ENCODE measurements at regions of chr5 and their contacts with region 1.

Region 1: GRCh38 chr5:91419571-91420537 is 36.7 kb upstream of the ARRDC3 start:
- DNase-seq: peak; percentile 47 to 82 (median 77)
- ATAC-seq: no peak
- H3K4me3 ChIP-seq: no peak overlapping the region
- H3K4me3 Mint-ChIP-seq: no peak overlapping the region
- H3K27ac ChIP-seq: no peak overlapping the region
- H3K27ac Mint-ChIP-seq: no peak overlapping the region
- H3K4me1 ChIP-seq: peaks cover 9% of the 10 kb centered on the region
- H3K4me1 Mint-ChIP-seq: peaks cover 22% of the 10 kb centered on the region
- H3K27me3 ChIP-seq: no peaks in the 10 kb centered on the region
- H3K27me3 Mint-ChIP-seq: no peaks in the 10 kb centered on the region
- CTCF ChIP-seq: peak; percentile 92

Region 2: DNA sequence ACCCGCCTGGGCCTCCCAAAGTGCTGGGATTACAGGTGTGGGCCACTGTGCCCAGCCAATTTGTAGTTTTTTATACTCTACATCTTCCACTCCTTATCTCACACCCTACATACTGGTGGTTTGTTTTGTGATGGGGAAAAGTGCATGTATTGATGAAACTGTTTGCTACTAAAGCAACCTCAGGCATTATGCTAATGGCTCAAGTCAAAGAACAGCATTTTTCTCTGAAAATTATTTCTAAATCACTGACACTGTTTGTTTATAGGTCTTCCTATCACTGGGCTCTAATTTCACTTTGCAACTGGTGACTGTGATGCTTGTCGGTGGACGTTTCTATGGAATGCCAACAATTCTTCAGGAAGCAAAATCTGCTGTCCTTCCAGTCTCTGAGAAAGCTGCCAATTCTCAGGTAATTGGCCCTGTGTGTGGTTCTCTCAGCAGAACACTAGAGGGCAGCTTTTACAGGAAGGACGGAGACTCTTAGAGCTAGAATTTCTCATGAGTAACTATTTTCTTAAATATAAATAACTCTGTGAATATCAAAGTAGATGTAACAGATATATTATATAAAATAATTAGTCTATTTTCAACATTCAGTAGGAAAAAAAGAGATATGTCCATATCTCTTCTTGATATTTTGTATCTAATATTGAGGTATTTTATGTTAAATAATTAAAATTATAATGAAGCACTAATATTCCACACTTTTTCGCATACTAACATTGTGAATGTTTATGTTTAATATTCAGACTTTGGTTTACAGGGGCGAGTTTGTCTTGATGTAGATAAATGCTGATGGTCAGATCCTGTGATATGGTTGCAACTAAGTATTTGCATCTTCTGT is 617.2 kb before region 1 on chr5:
- CTCF ChIA-PET with region 1: interaction called, 3 read pairs
- POLR2A ChIA-PET with region 1: no interaction called
- intact Hi-C with region 1: loop called (anchors 1 to 2 kb)
- DNase-seq: peak in 2 of 9 experiments; percentile 15 to 20
- ATAC-seq: peak; percentile 40
- H3K4me3 ChIP-seq: no peak overlapping the region
- H3K4me3 Mint-ChIP-seq: no peak overlapping the region
- H3K27ac ChIP-seq: no peak overlapping the region
- H3K27ac Mint-ChIP-seq: no peak overlapping the region
- H3K4me1 ChIP-seq: no peaks in the 10 kb centered on the region
- H3K4me1 Mint-ChIP-seq: no peaks in the 10 kb centered on the region
- H3K27me3 ChIP-seq: no peaks in the 10 kb centered on the region
- H3K27me3 Mint-ChIP-seq: peaks cover 2% of the 10 kb centered on the region
- CTCF ChIP-seq: peak; percentile 65

Region 3: GRCh38 chr5:90932052-90932699 is 487.7 kb before region 1 on chr5:
- CTCF ChIA-PET with region 1: interaction called, 39 read pairs
- POLR2A ChIA-PET with region 1: no interaction called
- intact Hi-C with region 1: loop called in 1 of 2 experiments (anchors 1 kb)
- DNase-seq: peak in 5 of 9 experiments; percentile 9 to 63 (median 27)
- ATAC-seq: no peak
- H3K4me3 ChIP-seq: no peak overlapping the region
- H3K4me3 Mint-ChIP-seq: no peak overlapping the region
- H3K27ac ChIP-seq: no peak overlapping the region
- H3K27ac Mint-ChIP-seq: no peak overlapping the region
- H3K4me1 ChIP-seq: no peaks in the 10 kb centered on the region
- H3K4me1 Mint-ChIP-seq: peaks cover 4% of the 10 kb centered on the region
- H3K27me3 ChIP-seq: no peaks in the 10 kb centered on the region
- H3K27me3 Mint-ChIP-seq: peaks cover 12% of the 10 kb centered on the region
- CTCF ChIP-seq: peak; percentile 70

Region 4: GRCh38 chr5:91219803-91220371 is 200.0 kb before region 1 on chr5:
- CTCF ChIA-PET with region 1: interaction called, 50 read pairs
- POLR2A ChIA-PET with region 1: no interaction called
- intact Hi-C with region 1: no loop called
- DNase-seq: peak in 6 of 9 experiments; percentile 5 to 58 (median 23)
- ATAC-seq: no peak
- H3K4me3 ChIP-seq: no peak overlapping the region
- H3K4me3 Mint-ChIP-seq: no peak overlapping the region
- H3K27ac ChIP-seq: no peak overlapping the region
- H3K27ac Mint-ChIP-seq: no peak overlapping the region
- H3K4me1 ChIP-seq: no peaks in the 10 kb centered on the region
- H3K4me1 Mint-ChIP-seq: no peaks in the 10 kb centered on the region
- H3K27me3 ChIP-seq: no peaks in the 10 kb centered on the region
- H3K27me3 Mint-ChIP-seq: no peaks in the 10 kb centered on the region
- CTCF ChIP-seq: no peak

Region 5: DNA sequence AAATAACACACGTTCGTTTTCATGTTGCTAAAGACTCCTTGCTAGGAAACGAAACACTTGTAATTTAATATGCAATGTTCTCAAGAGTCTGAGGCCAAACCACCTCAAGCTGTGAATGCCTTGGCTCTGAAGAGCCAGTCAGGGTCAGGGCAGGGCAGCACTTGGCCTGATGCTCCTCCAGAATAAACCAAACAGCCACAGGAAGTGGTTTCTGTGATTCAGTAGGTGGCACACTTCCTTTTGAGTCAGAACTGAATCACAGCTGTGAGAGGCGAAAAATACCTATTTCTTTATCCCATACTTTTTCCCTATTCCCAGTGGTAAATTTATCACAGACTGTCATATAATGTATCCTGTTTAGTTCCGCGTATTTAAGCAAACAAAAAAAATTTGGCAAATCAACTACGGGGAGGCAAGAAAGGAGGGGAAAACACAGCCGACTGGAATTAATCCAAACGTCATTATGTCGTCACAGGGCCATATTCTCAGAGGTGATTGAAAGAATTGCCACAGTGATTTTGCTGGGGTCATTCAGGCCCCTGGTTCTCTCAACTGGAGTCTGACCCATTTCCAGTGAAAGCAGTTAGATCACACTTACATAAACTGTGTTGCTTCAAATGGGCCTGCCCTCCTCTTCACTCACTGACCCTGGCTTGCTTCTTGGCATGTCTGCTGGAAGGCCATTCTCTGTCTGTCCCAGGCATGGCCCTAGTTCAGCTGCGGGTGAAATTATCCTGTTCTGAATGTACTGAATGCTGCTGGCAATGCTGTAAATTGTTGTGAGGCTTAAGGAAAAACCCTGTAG is 108.0 kb before region 1 on chr5:
- CTCF ChIA-PET with region 1: no interaction called
- POLR2A ChIA-PET with region 1: no interaction called
- intact Hi-C with region 1: no loop called
- DNase-seq: peak; percentile 30 to 91 (median 73)
- ATAC-seq: peak; percentile 72
- H3K4me3 ChIP-seq: no peak overlapping the region
- H3K4me3 Mint-ChIP-seq: peak overlapping the region; percentile 49
- H3K27ac ChIP-seq: peak overlapping the region; percentile 40 to 75
- H3K27ac Mint-ChIP-seq: peak overlapping the region; percentile 93
- H3K4me1 ChIP-seq: peaks cover 39% of the 10 kb centered on the region
- H3K4me1 Mint-ChIP-seq: peaks cover 49% of the 10 kb centered on the region
- H3K27me3 ChIP-seq: no peaks in the 10 kb centered on the region
- H3K27me3 Mint-ChIP-seq: no peaks in the 10 kb centered on the region
- CTCF ChIP-seq: no peak

Region 6: DNA sequence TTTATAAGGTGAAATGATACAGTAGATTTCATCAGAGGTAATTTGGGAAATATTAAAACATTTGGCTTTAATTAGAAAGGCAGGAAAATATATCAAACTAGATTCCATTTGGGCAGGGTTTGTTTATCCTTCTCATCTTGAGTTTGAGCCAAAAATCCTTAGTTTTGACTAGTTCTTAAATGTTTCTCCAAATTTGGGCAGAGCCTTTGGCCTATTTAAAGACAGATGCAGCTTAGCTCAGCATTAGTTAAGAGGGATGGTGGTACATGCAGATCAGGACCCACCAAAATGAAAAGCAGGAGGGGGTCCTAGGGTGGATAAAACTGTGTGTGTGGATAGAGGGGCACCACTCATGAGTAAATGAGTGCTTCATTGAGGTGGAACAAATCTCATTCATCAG is 16.4 kb before region 1 on chr5:
- CTCF ChIA-PET with region 1: interaction called, 31 read pairs
- POLR2A ChIA-PET with region 1: interaction called, 5 read pairs
- intact Hi-C with region 1: no loop called
- DNase-seq: no peak
- ATAC-seq: no peak
- H3K4me3 ChIP-seq: no peak overlapping the region
- H3K4me3 Mint-ChIP-seq: no peak overlapping the region
- H3K27ac ChIP-seq: no peak overlapping the region
- H3K27ac Mint-ChIP-seq: no peak overlapping the region
- H3K4me1 ChIP-seq: no peaks in the 10 kb centered on the region
- H3K4me1 Mint-ChIP-seq: no peaks in the 10 kb centered on the region
- H3K27me3 ChIP-seq: no peaks in the 10 kb centered on the region
- H3K27me3 Mint-ChIP-seq: no peaks in the 10 kb centered on the region
- CTCF ChIP-seq: no peak

Region 7: GRCh38 chr5:91434348-91434747 is 14.5 kb after region 1 on chr5:
- CTCF ChIA-PET with region 1: interaction called, 19 read pairs
- POLR2A ChIA-PET with region 1: interaction called, 6 read pairs
- intact Hi-C with region 1: no loop called
- DNase-seq: peak in 4 of 9 experiments; percentile 11 to 60 (median 34)
- ATAC-seq: peak; percentile 63
- H3K4me3 ChIP-seq: no peak overlapping the region
- H3K4me3 Mint-ChIP-seq: peak overlapping the region; percentile 57
- H3K27ac ChIP-seq: peak overlapping the region; percentile 20 to 74
- H3K27ac Mint-ChIP-seq: peak overlapping the region; percentile 90
- H3K4me1 ChIP-seq: peaks cover 44% of the 10 kb centered on the region
- H3K4me1 Mint-ChIP-seq: peaks cover 42% of the 10 kb centered on the region
- H3K27me3 ChIP-seq: no peaks in the 10 kb centered on the region
- H3K27me3 Mint-ChIP-seq: no peaks in the 10 kb centered on the region
- CTCF ChIP-seq: no peak